Prostate gland (tissue), 2 donors: ENCODE measurements at regions of chr16 and their contacts with region 1.

Region 1: DNA sequence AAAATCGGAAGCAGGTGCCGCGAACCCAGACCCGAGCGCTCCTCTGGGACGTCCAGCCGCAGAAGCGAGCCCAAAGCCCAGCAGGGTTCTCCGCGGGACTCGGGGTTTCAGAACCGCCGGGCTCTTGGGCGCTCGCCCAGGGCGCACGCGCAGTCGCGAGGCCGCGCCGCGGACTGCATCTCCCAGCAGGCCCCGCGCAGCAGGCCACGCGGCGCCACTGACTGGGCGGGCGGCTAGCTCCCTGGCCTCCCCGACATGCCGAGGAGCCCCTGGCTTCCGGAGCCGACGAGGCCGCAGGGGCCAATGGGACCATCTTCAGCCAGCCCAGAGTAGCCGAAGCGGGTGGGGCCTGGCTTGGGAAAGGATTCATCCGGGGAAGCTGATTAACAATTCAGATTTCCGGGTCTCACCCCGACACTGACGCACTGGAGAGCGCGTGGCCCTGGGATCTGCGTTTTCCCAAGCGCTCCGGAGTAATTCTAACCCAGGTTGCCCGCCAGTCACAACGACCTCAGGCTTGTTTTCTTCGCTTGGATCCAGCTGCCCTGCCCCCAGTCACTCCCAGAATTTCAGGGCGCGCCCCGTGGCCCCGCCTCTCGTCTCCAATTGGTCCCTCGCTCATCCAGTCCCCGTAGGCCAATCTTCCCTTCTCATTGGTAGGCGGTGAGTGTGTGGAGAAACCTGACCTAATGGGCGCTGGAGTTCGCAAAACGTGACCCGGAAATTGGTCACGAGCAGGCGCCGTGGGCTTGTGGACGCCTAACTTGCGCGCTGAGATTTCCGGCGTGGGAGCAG is at the start of gene ZNF263:
- DNase-seq: peak; percentile 97
- H3K4me3 ChIP-seq: peak within 1 kb of the TSS; percentile 86 to 94
- H3K27ac ChIP-seq: peak within 1 kb of the TSS; percentile 98 to 99
- H3K4me1 ChIP-seq: peaks cover 9% of the 10 kb centered on the region
- H3K27me3 ChIP-seq: no peaks in the 10 kb centered on the region
- CTCF ChIP-seq: peak in 1 of 4 experiments; percentile 32
- POLR2A ChIP-seq: peak; percentile 49
- total RNA-seq, gene ZNF263: 51.2 to 88.8 TPM

Region 2: DNA sequence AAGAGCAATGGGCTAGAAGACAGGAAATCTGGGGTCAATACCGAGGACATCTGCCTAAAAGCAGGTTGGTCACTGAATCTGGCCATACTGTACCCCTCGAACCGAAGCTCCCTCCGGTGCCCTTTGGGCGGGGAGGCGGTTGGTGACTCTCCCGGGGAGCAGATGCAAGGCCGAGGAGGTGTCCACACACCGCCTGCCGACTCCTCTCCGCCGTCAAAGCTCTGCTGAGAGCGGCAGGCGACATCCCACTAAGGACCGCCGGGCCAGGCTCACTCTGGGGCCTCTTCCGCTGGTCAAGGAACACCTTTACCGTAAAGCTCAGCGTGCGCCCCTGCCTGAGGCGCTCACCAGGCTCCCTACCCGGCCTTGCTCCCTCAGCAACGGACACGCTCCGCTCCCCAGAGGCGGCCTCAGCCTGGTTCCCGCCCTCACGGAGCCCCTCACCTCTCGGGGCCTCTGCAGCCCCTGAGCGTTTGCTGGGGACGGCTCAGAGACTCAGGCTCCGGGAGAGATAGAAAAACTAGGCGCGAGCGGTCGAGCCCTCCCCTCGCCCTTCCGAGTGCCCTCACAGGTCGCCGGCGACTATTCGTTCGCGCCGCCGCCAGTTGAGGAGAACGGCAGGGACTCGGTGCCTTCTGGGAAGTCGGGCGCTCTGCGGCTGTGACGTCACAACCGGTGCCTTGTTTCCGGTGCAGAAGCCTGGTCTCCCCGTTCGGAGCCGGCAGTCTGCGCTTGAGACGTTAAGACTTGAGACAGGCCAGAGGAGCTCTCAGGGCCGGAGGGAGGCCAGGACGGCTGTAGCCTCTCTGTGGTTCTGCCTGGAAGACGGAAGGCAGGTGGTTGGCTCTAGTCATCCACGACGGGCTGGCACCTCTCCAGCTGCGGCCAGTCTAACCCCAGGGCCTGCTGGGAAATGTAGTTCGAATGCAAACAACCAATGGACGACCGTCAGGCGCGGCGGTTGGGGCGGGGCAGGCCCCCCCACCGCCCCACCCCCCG is 48.1 kb before region 1 on chr16 and contains the start of gene ZNF200:
- intact Hi-C with region 1: loop called (anchors 1 kb)
- DNase-seq: peak; percentile 96
- H3K4me3 ChIP-seq: peak within 1 kb of the TSS; percentile 59 to 92
- H3K27ac ChIP-seq: peak within 1 kb of the TSS; percentile 95 to 98
- H3K4me1 ChIP-seq: peaks cover 3% of the 10 kb centered on the region
- H3K27me3 ChIP-seq: no peaks in the 10 kb centered on the region
- CTCF ChIP-seq: peak in 1 of 4 experiments; percentile 17
- POLR2A ChIP-seq: no peak
- total RNA-seq, gene ZNF200: 8.2 to 18.6 TPM

Region 3: DNA sequence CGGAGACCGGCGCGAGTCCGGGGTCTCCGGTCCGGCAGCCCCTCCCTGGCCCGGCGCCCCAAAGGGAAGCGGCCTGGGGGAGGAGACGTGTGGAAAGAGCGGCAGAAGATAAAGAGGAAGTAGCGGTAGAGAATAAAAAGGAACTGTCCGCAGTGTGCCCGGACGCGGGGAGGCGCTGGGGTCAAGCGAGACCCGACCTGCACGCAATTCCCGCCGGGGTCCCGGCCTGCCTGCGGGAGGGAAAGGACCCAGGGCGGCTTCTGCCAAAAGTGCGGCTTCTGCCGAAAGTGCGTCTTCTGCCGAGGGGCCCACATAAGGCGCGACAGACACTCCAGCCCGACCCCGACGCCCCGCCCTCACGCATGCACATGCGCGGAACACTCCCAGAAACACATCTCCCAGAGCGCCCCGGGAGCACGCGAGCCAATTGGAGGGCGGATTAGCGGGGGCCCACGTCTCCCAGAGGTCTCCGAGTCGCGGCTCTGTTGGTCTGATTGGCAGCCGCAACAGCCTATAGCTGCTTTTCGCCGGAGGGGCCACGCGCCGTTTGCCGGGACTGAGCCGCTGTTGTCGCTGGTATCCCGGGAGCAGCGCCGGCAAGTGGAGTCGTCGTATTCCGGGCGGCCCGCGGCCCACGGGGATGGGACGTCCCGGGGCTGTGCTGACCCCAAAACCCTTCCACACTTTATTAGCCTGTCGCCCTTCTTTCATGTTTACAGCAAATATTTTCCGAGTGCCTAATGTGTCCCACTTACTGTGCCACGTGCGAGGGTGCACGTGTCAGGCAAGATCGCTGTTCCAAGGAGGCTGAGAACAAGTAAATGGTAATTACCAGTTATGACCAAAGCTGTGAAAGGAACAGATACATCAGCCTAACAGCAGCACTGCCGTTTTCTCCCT is 18.5 kb before region 1 on chr16:
- intact Hi-C with region 1: loop called (anchors 2 kb)
- DNase-seq: peak; percentile 96
- H3K4me3 ChIP-seq: peak overlapping the region; percentile 61 to 63
- H3K27ac ChIP-seq: peak overlapping the region; percentile 95 to 96
- H3K4me1 ChIP-seq: no peaks in the 10 kb centered on the region
- H3K27me3 ChIP-seq: no peaks in the 10 kb centered on the region
- CTCF ChIP-seq: peak in 1 of 4 experiments; percentile 9
- POLR2A ChIP-seq: peak; percentile 81

Region 4: GRCh38 chr16:3305109-3306068 is 22.5 kb after region 1 on chr16 and contains the starts of genes TIGD7 and ZNF75A:
- intact Hi-C with region 1: loop called (anchors 2 kb)
- DNase-seq: peak; percentile 82
- H3K4me3 ChIP-seq: peak within 1 kb of the TSS; percentile 73 to 78
- H3K27ac ChIP-seq: peak within 1 kb of the TSS; percentile 91 to 93
- H3K4me1 ChIP-seq: no peaks in the 10 kb centered on the region
- H3K27me3 ChIP-seq: no peaks in the 10 kb centered on the region
- CTCF ChIP-seq: peak in 3 of 4 experiments; percentile 12 to 44 (median 38)
- POLR2A ChIP-seq: peak; percentile 57
- total RNA-seq, gene TIGD7: 4.4 to 15.5 TPM
- total RNA-seq, gene ZNF75A: 34.9 to 41.5 TPM

Region 5: GRCh38 chr16:3509470-3509928 is 226.6 kb after region 1 on chr16:
- intact Hi-C with region 1: loop called (anchors 10 kb)
- DNase-seq: no peak
- H3K4me3 ChIP-seq: no peak overlapping the region
- H3K27ac ChIP-seq: no peak overlapping the region
- H3K4me1 ChIP-seq: no peaks in the 10 kb centered on the region
- H3K27me3 ChIP-seq: no peaks in the 10 kb centered on the region
- CTCF ChIP-seq: no peak
- POLR2A ChIP-seq: no peak

Region 6: DNA sequence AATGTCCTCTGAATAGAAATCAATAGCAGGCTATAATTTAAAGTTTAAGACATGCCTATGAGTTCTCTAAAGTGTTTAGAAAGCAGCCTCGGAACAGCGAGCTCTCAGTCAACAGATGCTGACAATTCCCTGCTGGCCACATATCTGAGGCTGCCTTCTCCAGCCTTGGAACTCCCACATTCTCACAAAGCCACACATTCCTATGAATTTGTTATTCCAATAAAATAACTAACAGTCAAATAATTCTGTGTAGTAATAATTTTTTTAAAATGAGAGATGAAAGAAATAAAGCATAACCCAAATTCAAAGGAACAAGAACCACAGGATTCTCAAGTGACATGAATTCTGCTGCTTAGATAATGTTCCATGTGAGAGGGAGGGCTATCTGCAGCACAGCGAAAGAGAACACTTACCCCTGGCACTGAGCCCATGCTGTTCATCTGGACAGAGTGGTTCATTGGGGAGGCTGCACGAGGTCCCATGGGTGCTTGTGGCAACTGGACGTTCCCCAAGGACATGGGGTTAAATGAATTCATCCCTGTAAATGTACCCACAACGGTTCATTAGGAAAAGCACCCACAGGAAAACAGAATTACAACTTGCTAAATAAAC is 491.3 kb after region 1 on chr16:
- intact Hi-C with region 1: no loop called
- DNase-seq: no peak
- H3K4me3 ChIP-seq: no peak overlapping the region
- H3K27ac ChIP-seq: no peak overlapping the region
- H3K4me1 ChIP-seq: no peaks in the 10 kb centered on the region
- H3K27me3 ChIP-seq: no peaks in the 10 kb centered on the region
- CTCF ChIP-seq: no peak
- POLR2A ChIP-seq: no peak